MCF 10A (cell line): ENCODE measurements at regions of chr11 and their contacts with region 1.

Region 1: GRCh38 chr11:20022363-20023081 is 137.8 kb downstream of the DBX1 start:
- DNase-seq: peak; percentile 77
- H3K4me3 Mint-ChIP-seq: peak overlapping the region; percentile 79
- H3K27ac Mint-ChIP-seq: peak overlapping the region; percentile 85
- H3K4me1 Mint-ChIP-seq: peaks cover 19% of the 10 kb centered on the region
- H3K27me3 Mint-ChIP-seq: no peaks in the 10 kb centered on the region
- CTCF ChIP-seq: no peak

Region 2: GRCh38 chr11:19988598-19988997 is 33.9 kb before region 1 on chr11:
- CTCF ChIA-PET with region 1: interaction called, 7 read pairs
- POLR2A ChIA-PET with region 1: interaction called, 70 read pairs
- intact Hi-C with region 1: no loop called
- DNase-seq: peak; percentile 53
- H3K4me3 Mint-ChIP-seq: no peak overlapping the region
- H3K27ac Mint-ChIP-seq: peak overlapping the region; percentile 98
- H3K4me1 Mint-ChIP-seq: peaks cover 41% of the 10 kb centered on the region
- H3K27me3 Mint-ChIP-seq: no peaks in the 10 kb centered on the region
- CTCF ChIP-seq: no peak

Region 3: DNA sequence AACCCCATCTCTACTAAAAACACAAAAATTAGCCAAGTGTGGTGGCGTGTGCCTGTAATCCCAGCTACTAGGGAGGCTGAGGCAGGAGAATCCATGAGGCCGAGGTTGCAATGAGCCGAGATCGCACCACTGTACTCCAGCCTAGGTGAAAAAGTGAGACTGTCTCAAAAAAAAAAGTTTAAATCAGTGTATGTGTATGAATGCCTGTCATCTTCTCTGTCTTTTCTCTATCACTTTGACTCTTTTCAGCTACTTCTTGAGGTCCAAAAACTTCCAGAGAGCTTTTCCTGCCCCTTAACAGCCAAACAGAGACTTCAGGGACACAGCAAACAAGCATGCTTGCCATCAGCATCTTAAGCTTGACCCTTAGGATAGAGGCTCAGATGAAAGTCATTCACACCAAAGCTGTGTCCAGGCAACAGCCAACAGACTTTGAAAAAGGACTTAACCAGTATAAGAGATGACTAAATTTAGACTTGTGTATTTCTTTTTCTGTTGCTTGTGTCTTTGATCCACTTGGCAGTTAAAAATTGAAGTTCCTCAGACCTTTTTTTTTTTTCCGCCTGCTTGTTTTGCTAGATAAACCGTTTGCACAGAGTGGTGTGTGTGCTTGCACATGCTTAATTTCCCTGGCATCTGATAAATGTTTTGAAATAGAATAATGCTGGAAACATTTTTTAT is 14.2 kb before region 1 on chr11:
- CTCF ChIA-PET with region 1: interaction called, 93 read pairs
- POLR2A ChIA-PET with region 1: interaction called, 492 read pairs
- intact Hi-C with region 1: loop called (anchors 1 kb)
- DNase-seq: no peak
- H3K4me3 Mint-ChIP-seq: no peak overlapping the region
- H3K27ac Mint-ChIP-seq: no peak overlapping the region
- H3K4me1 Mint-ChIP-seq: peaks cover 24% of the 10 kb centered on the region
- H3K27me3 Mint-ChIP-seq: no peaks in the 10 kb centered on the region
- CTCF ChIP-seq: no peak

Region 4: DNA sequence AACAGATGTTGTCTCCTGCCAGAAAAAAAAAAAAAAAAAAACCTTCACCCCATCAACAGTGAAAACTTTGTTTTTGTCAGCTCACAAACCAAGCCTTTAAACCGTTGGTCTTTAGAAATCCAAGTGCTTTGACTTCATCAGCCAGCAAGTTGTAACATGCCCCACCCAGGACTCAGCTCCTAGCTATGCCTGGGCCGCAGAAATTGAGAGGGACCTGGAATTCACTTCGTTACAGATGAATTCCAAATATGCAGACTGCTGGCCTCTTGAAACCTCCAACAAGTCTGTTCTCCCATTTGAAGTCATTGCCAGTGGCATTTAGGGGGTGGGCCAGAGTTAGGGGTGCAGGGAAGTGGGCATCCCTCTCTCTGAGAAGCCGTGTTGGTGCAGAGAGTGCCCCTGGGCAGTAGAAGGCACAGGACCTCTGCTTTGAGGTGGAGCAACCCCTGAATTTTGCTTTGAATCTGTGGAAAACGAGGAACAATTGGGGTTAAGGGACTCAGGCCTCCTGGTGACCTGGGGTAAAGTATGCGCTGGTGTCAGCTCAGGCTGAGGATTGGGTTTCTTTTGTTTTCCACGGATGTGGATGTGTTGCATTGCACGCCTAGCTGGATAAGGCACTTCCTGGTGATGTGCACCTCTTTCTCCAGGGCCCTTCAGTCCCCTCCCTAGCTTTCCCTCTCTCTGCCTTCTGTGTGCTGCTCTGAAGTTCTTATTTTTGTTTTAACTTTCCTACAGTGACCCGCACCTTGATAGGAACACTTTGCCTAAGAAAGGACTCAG is 28.2 kb after region 1 on chr11:
- CTCF ChIA-PET with region 1: interaction called, 40 read pairs
- POLR2A ChIA-PET with region 1: interaction called, 691 read pairs
- intact Hi-C with region 1: no loop called
- DNase-seq: peak; percentile 77
- H3K4me3 Mint-ChIP-seq: peak overlapping the region; percentile 30
- H3K27ac Mint-ChIP-seq: peak overlapping the region; percentile 93
- H3K4me1 Mint-ChIP-seq: peaks cover 66% of the 10 kb centered on the region
- H3K27me3 Mint-ChIP-seq: no peaks in the 10 kb centered on the region
- CTCF ChIP-seq: no peak

Region 5: DNA sequence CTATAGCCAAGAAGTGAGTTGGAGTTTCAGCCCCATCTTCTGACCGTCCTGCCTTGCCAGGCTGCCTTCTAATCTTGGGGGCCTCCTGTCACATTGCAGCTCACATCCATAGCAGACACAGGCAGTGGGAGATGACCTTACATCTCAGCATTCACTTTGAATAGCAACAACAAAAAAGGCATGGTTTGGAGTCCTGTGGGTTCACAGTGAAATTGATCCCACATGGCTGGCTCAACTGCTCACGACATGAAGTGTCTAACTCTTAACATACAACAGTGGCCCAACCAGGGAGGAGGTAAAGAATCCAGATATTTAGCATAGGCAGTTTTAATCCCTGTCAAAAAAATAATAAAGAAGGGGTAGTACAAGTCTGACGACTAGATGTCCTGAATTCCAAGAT is 99.6 kb after region 1 on chr11:
- CTCF ChIA-PET with region 1: no interaction called
- POLR2A ChIA-PET with region 1: no interaction called
- intact Hi-C with region 1: no loop called
- DNase-seq: no peak
- H3K4me3 Mint-ChIP-seq: no peak overlapping the region
- H3K27ac Mint-ChIP-seq: no peak overlapping the region
- H3K4me1 Mint-ChIP-seq: peaks cover 24% of the 10 kb centered on the region
- H3K27me3 Mint-ChIP-seq: no peaks in the 10 kb centered on the region
- CTCF ChIP-seq: no peak

Region 6: GRCh38 chr11:20355221-20356219 is 333.0 kb after region 1 on chr11:
- CTCF ChIA-PET with region 1: interaction called, 11 read pairs
- POLR2A ChIA-PET with region 1: no interaction called
- intact Hi-C with region 1: no loop called
- DNase-seq: peak; percentile 65
- H3K4me3 Mint-ChIP-seq: no peak overlapping the region
- H3K27ac Mint-ChIP-seq: no peak overlapping the region
- H3K4me1 Mint-ChIP-seq: peaks cover 17% of the 10 kb centered on the region
- H3K27me3 Mint-ChIP-seq: no peaks in the 10 kb centered on the region
- CTCF ChIP-seq: peak; percentile 69

Region 7: DNA sequence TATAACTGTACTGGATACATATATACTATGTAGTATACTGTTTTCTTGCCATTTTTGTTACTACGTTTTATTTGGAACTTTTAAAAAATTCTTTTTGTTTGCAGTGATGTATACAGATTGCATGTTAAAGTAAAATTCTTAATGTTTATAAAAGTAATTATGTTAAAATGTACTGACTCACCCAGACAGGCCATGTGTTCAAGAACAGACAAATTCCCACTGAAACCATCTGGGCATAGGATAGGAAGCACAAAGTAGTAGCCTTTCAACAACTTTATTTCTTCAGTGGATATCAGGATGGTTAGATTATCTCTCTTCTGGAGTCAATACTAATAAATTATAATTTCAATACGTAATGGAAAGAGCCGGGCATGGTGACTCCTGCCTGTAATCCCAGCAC is 384.8 kb after region 1 on chr11:
- CTCF ChIA-PET with region 1: no interaction called
- POLR2A ChIA-PET with region 1: no interaction called
- intact Hi-C with region 1: no loop called
- DNase-seq: no peak
- H3K4me3 Mint-ChIP-seq: no peak overlapping the region
- H3K27ac Mint-ChIP-seq: no peak overlapping the region
- H3K4me1 Mint-ChIP-seq: no peaks in the 10 kb centered on the region
- H3K27me3 Mint-ChIP-seq: no peaks in the 10 kb centered on the region
- CTCF ChIP-seq: no peak